Gastrocnemius medialis (tissue), 4 donors: ENCODE measurements at regions of chr12 and their contacts with region 1.

Region 1: DNA sequence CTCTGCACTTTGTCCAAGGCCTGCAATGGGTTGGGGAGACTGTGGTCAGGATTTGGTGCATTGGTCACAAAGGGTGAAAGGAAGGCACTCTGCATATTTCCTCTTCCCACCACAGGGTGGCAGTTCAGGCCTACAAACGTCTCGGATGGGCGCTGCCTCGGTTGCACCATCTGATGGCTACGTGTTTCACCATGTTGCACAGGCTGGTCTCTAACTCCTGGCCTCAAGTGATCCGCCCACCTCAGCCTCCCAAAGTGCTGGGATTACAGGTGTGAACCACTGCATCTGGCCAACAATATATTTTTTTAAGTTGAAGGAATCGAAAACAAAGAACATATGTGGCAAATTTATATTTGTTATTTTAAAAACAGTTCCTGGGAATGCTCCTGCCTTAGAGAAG is 35.1 kb downstream of the TMBIM6 start:
- DNase-seq: peak; percentile 48 to 66
- ATAC-seq: peak; percentile 86 to 93
- H3K4me3 ChIP-seq: no peak overlapping the region
- H3K27ac ChIP-seq: no peak overlapping the region
- H3K4me1 ChIP-seq: no peaks in the 10 kb centered on the region
- H3K27me3 ChIP-seq: no peaks in the 10 kb centered on the region
- CTCF ChIP-seq: peak; percentile 79 to 88 (median 79)
- POLR2A ChIP-seq: no peak

Region 2: DNA sequence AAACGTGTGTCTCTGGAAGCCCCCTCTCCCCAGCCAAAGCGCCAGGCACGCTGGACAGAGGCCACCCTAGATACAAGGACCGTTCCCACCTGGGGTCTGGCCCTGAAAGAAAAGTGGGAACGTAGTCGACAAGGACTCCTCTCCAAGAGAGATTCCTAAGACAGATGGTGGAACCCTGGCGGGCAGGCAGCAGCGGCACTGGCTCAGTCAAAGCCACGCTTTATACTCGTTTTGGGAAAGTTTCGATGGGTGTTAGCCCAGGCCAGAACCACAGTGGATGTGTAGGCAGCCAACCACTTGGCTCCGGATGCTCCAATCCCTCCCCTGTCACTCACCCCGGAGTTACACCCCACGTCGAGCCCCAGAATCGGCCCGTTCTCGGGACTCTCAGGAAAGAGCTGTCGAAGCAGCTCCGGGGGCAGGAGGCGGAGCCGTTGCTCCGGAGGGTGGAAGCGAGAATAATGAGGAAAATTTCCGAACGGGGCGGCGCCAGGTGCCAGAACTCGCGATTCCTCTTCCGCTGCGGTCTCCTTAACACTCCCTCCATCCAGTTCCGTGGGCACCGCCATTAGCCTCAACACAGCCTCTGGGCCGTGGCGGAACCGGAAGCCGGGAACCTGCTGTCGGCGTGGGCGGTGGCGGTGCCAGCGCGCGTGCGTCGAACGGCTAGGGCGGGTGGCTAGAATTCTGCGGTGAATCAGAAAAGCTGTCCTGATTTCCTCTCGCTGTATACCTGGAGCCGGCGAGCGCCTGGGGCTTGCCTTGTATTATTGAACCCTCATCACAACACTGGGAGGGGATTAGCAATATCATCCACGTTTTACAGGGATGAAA is 66.3 kb after region 1 on chr12 and contains the start of gene BCDIN3D:
- in situ Hi-C with region 1: loop called (anchors 5 to 10 kb)
- intact Hi-C with region 1: loop called (anchors 1 kb)
- DNase-seq: peak; percentile 80 to 84
- ATAC-seq: peak; percentile 94 to 96
- H3K4me3 ChIP-seq: peak within 1 kb of the TSS; percentile 85 to 96 (median 92)
- H3K27ac ChIP-seq: peak within 1 kb of the TSS; percentile 85 to 94 (median 88)
- H3K4me1 ChIP-seq: peaks cover 11 to 17% of the 10 kb centered on the region in 2 donors
- H3K27me3 ChIP-seq: peaks cover 4 to 9% (median 8%) of the 10 kb centered on the region in 3 donors
- CTCF ChIP-seq: no peak
- POLR2A ChIP-seq: peak; percentile 58 to 75
- total RNA-seq, gene BCDIN3D: 1.2 to 2.7 (median 2.3) TPM

Region 3: DNA sequence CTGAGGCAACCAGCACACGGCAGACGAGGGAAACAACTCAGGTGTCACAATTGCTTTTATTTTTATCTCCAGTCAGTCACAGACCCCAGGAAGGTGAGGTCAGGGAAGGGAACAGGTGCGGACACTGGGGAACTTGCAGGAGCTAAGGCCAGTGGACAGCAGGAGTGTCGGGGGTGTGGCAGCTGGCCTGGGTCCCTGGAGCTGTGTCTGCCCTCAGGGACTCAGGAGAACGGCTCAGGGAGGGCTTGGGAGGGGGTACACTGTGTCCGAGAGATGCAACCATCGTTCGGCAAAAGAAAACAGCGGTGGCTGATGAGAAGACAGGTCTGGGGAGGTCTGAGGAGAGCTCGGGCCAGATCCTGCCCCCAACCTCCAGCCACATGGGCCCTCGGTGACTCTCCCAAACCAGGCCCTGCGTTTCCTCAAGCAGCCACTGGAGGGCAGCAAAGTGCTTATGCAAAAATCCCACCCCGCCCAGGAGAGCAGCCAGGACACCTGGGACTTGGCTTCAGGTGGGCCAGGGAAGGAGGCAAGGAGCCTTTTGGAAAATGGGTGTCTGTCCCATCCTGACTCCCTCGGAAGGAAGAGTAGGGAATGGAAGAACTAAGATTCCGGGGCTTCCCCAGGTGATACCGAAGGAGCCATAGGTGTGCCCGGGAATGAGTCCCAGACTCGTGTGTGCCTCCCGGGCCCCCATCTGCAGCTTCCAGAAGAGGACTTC is 90.6 kb after region 1 on chr12:
- in situ Hi-C with region 1: no loop called
- intact Hi-C with region 1: loop called (anchors 1 kb)
- DNase-seq: peak in 1 of 2 donors; percentile 57
- ATAC-seq: peak; percentile 43 to 73
- H3K4me3 ChIP-seq: no peak overlapping the region
- H3K27ac ChIP-seq: no peak overlapping the region
- H3K4me1 ChIP-seq: peaks cover 10 to 19% of the 10 kb centered on the region in 2 donors
- H3K27me3 ChIP-seq: no peaks in the 10 kb centered on the region
- CTCF ChIP-seq: peak; percentile 79 to 97 (median 90)
- POLR2A ChIP-seq: no peak